Mammary epithelial cell (primary cell): ENCODE measurements at regions of chr4 and their contacts with region 1.

Region 1: GRCh38 chr4:101009471-101009870 is 337.9 kb downstream of the PPP3CA start:
- DNase-seq: no peak
- H3K4me3 ChIP-seq: no peak overlapping the region
- H3K27ac ChIP-seq: no peak overlapping the region
- H3K4me1 ChIP-seq: no peaks in the 10 kb centered on the region
- H3K27me3 ChIP-seq: no peaks in the 10 kb centered on the region
- CTCF ChIP-seq: no peak

Region 2: DNA sequence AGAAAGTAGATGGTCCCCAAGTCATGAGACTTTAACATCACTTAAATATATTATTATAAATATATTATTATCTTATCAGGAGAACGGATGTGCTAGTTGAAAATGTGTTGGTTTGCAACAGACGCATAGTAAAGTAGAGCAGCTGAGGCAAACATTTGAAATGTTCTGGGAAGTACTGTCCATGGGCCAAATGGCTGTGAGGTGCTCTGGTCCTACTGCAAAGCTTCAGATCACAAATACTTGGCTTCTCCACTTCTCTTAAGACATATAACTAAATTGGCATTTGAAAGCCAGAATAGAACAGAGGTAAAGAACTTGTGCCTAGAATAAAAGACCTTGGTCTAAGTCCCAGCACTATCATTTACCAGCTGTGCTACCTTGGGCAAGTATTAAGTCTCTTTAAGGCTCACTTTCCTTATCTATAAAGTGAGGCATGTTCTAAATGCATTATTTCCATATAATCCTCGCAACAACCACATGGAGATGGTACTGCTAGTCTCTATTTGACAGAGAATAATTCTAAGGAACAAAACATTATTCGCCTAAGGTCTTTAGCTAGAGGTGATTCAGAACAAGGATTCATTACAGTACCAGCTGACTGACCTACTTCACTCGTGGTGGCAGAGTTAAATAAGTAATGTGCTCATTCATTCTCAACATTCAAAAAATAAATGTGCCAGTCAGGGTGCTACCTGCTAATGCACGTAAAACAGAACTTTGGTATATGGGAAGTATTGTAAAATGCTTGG is 40.8 kb after region 1 on chr4:
- CTCF ChIA-PET with region 1: no interaction called
- dilution Hi-C with region 1: no loop called
- in situ Hi-C with region 1: no loop called
- intact Hi-C with region 1: loop called (anchors 1 kb)
- DNase-seq: no peak
- H3K4me3 ChIP-seq: no peak overlapping the region
- H3K27ac ChIP-seq: no peak overlapping the region
- H3K4me1 ChIP-seq: no peaks in the 10 kb centered on the region
- H3K27me3 ChIP-seq: no peaks in the 10 kb centered on the region
- CTCF ChIP-seq: no peak

Region 3: DNA sequence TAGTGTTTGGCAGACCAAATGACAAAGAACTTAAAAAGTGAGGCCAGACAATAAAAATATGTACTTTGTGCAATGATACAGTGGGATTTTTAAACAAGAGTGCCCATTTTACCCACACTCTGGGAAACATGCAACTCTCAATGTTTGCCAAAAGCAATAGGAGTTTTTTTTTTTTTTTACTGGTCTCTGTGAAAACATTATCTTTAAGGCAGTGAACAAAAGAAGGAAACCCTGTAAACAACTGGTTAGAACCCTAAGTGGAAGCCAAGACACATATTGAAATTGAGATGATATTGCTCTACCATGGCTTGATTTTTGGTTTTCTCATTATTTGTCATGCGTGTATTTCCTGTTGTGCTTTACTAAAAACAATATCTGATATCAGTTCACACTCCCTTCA is 405.0 kb after region 1 on chr4:
- CTCF ChIA-PET with region 1: no interaction called
- dilution Hi-C with region 1: no loop called
- in situ Hi-C with region 1: no loop called
- intact Hi-C with region 1: no loop called
- DNase-seq: no peak
- H3K4me3 ChIP-seq: no peak overlapping the region
- H3K27ac ChIP-seq: no peak overlapping the region
- H3K4me1 ChIP-seq: no peaks in the 10 kb centered on the region
- H3K27me3 ChIP-seq: no peaks in the 10 kb centered on the region
- CTCF ChIP-seq: no peak

Region 4: GRCh38 chr4:101500742-101501141 is 491.3 kb after region 1 on chr4:
- CTCF ChIA-PET with region 1: no interaction called
- dilution Hi-C with region 1: no loop called
- in situ Hi-C with region 1: no loop called
- intact Hi-C with region 1: no loop called
- DNase-seq: peak; percentile 76
- H3K4me3 ChIP-seq: no peak overlapping the region
- H3K27ac ChIP-seq: no peak overlapping the region
- H3K4me1 ChIP-seq: no peaks in the 10 kb centered on the region
- H3K27me3 ChIP-seq: no peaks in the 10 kb centered on the region
- CTCF ChIP-seq: no peak